ENCODE measurements at regions of chr6 and their contacts with region 1.

Region 1: GRCh38 chr6:130697995-130698535 is 129.1 kb upstream of the SMLR1 start:
- DNase-seq: peak; percentile 63
- H3K4me3 ChIP-seq: no peak overlapping the region
- H3K27ac ChIP-seq: no peak overlapping the region
- H3K4me1 ChIP-seq: peaks cover 8% of the 10 kb centered on the region
- H3K27me3 ChIP-seq: peaks cover 0 to 4% of the 10 kb centered on the region in 2 experiments
- CTCF ChIP-seq: peak; percentile 69 to 78
- POLR2A ChIP-seq: no peak

Region 2: GRCh38 chr6:130357436-130357835 is 340.6 kb before region 1 on chr6:
- CTCF ChIA-PET with region 1: interaction called, 14 read pairs
- POLR2A ChIA-PET with region 1: no interaction called
- dilution Hi-C with region 1: no loop called
- intact Hi-C with region 1: no loop called
- DNase-seq: no peak
- H3K4me3 ChIP-seq: no peak overlapping the region
- H3K27ac ChIP-seq: no peak overlapping the region
- H3K4me1 ChIP-seq: no peaks in the 10 kb centered on the region
- H3K27me3 ChIP-seq: peaks cover 0 to 3% of the 10 kb centered on the region in 2 experiments
- CTCF ChIP-seq: no peak
- POLR2A ChIP-seq: no peak

Region 3: GRCh38 chr6:130494729-130495128 is 203.3 kb before region 1 on chr6:
- CTCF ChIA-PET with region 1: interaction called, 4 read pairs
- POLR2A ChIA-PET with region 1: no interaction called
- dilution Hi-C with region 1: no loop called
- intact Hi-C with region 1: loop called (anchors 5 kb)
- DNase-seq: no peak
- H3K4me3 ChIP-seq: no peak overlapping the region
- H3K27ac ChIP-seq: no peak overlapping the region
- H3K4me1 ChIP-seq: no peaks in the 10 kb centered on the region
- H3K27me3 ChIP-seq: no peaks in the 10 kb centered on the region
- CTCF ChIP-seq: no peak
- POLR2A ChIP-seq: no peak

Region 4: DNA sequence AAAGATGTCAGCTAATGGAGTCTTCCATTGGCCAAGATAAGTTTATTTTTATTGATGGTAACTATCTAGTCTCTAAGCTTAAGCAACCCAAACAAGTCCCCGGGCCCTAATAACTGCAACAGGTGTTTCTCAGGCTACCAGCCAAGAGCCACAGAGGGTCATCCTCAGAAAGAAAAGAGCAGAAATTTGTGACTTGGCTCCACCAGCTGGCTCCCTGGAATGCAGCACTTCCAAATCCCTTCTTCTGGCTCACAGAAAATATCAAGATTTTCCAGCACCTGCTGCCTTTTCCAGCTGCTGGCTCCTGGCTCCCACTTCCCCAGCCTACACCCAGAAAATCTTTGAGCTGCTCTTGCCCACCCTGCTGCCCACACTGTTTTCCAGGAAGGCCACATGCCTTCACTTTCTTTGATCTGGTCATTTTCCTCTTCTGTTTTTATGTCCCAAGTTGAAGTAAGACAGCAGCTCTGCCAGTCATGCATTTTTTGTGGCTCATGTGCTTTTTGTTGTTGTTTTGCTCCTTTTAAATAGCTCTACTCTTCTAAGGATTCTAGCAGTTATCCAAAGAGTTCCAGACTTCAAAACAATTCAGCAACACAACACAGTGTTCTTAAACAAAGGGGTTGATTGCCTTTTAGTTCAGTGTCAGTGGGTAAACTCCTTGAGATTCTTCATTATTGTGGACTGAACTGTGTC is 21.8 kb before region 1 on chr6:
- CTCF ChIA-PET with region 1: interaction called, 17 read pairs
- POLR2A ChIA-PET with region 1: no interaction called
- dilution Hi-C with region 1: no loop called
- intact Hi-C with region 1: no loop called
- DNase-seq: no peak
- H3K4me3 ChIP-seq: no peak overlapping the region
- H3K27ac ChIP-seq: no peak overlapping the region
- H3K4me1 ChIP-seq: peaks cover 12% of the 10 kb centered on the region
- H3K27me3 ChIP-seq: no peaks in the 10 kb centered on the region
- CTCF ChIP-seq: no peak
- POLR2A ChIP-seq: no peak

Region 5: DNA sequence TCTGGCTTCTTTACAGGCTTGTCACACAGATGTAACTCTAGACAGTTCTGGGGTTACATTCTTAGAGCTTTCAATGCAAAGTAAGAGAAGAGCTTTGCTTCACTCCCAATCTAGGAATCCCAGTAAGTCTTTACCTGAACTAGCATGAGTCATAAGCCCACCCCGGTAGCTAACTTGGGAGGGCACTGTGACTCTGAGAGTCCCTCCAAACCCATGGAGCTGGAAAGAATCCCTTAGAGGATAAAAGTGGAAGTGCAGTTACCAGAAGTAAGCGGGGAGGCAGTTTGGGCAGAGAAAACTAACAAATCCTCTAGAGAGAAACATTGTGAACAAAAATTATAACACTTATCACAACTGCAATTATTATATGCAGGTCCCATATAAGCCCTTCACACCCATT is 45.1 kb after region 1 on chr6:
- CTCF ChIA-PET with region 1: interaction called, 18 read pairs
- POLR2A ChIA-PET with region 1: no interaction called
- dilution Hi-C with region 1: no loop called
- intact Hi-C with region 1: no loop called
- DNase-seq: no peak
- H3K4me3 ChIP-seq: no peak overlapping the region
- H3K27ac ChIP-seq: no peak overlapping the region
- H3K4me1 ChIP-seq: no peaks in the 10 kb centered on the region
- H3K27me3 ChIP-seq: peaks cover 0 to 6% of the 10 kb centered on the region in 2 experiments
- CTCF ChIP-seq: no peak
- POLR2A ChIP-seq: no peak

Region 6: GRCh38 chr6:130945401-130945919 is 247.4 kb after region 1 on chr6:
- CTCF ChIA-PET with region 1: no interaction called
- POLR2A ChIA-PET with region 1: no interaction called
- dilution Hi-C with region 1: no loop called
- intact Hi-C with region 1: no loop called
- DNase-seq: peak; percentile 89
- H3K4me3 ChIP-seq: peak overlapping the region in 1 of 3 experiments; percentile 20
- H3K27ac ChIP-seq: peak overlapping the region; percentile 69
- H3K4me1 ChIP-seq: peaks cover 30% of the 10 kb centered on the region
- H3K27me3 ChIP-seq: no peaks in the 10 kb centered on the region
- CTCF ChIP-seq: no peak
- POLR2A ChIP-seq: no peak

Region 7: DNA sequence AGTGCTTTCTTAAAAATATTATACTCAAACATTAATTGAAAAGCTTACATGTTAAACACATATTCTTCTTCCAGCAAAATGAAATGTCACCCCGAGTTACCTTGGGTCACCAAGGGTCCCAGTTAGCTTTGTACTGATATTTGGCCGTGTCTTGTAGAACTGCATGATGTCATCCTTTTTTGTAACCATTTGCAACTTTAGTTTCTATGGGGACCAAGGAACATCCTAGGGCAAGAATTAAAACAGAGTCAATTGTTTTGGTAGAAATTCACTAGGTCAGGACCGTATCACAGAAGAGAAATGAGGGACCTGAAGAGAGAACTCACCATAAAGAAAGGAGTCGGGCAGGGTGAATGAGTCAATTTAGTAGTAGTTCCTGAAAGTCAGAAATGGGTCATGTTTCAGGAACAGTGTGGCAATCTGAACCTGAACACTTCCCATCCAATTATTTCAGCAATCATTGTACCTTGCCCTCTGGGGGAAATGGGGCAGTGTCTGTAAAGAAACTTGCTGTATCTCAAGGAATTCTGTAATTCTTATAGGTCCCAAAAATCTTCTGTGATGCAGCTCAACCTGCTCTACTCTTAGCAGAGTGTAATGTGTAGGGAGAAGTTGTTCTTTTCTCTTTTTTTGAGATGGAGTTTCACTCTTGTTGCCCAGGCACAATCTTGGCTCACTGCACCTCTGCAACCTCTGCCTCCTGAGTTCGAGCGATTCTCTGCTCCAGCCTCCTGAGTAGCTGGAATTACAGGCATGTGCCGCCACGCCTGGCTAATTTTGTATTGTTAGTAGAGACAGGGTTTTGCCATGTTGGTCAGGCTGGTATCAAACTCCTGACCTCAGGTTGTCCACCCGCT is 431.9 kb after region 1 on chr6:
- CTCF ChIA-PET with region 1: no interaction called
- POLR2A ChIA-PET with region 1: no interaction called
- dilution Hi-C with region 1: no loop called
- intact Hi-C with region 1: no loop called
- DNase-seq: no peak
- H3K4me3 ChIP-seq: no peak overlapping the region
- H3K27ac ChIP-seq: no peak overlapping the region
- H3K4me1 ChIP-seq: peaks cover 4% of the 10 kb centered on the region
- H3K27me3 ChIP-seq: no peaks in the 10 kb centered on the region
- CTCF ChIP-seq: no peak
- POLR2A ChIP-seq: no peak

Measured in endothelial cell of umbilical vein (primary cell).